ENCODE measurements at regions of chr14 and their contacts with region 1.

Region 1: GRCh38 chr14:92651106-92651757 is 97.2 kb downstream of the LGMN start:
- DNase-seq: peak; percentile 76
- H3K4me3 Mint-ChIP-seq: peak overlapping the region; percentile 96
- H3K27ac Mint-ChIP-seq: peak overlapping the region; percentile 94
- H3K4me1 Mint-ChIP-seq: peaks cover 76% of the 10 kb centered on the region
- H3K27me3 Mint-ChIP-seq: no peaks in the 10 kb centered on the region

Region 2: GRCh38 chr14:92121670-92122350 is 529.4 kb before region 1 on chr14 and contains the starts of genes CPSF2 and NDUFB1:
- intact Hi-C with region 1: loop called (anchors 5 kb)
- DNase-seq: peak; percentile 80
- H3K4me3 Mint-ChIP-seq: peak within 1 kb of the TSS; percentile 97
- H3K27ac Mint-ChIP-seq: peak within 1 kb of the TSS; percentile 100
- H3K4me1 Mint-ChIP-seq: peaks cover 29% of the 10 kb centered on the region
- H3K27me3 Mint-ChIP-seq: no peaks in the 10 kb centered on the region
- total RNA-seq, gene CPSF2: 103 and 104 TPM in 2 replicates
- total RNA-seq, gene NDUFB1: 73.3 and 83.5 TPM in 2 replicates

Region 3: DNA sequence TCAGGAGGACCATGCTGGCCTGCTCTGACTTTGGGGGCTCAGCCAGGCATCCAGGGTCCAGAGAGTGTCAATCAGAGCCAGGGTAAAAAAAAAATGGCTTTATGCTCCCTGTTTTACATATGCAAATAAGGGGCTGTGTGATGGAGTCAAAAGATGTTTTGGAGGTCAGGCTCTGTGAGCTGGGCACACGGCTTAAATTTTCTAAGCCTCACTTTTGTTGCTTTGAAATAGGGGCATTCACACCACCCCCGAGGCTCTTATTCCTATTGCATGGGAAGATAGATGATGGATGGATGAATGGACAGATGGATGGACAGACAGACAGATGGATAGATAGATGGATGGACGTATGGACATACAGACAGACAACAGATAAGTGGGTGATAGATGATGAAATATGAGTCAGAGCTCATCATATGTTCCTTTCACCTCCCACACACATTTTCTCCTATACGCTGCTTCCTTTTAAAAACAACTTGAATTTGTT is 94.9 kb before region 1 on chr14:
- intact Hi-C with region 1: loop called (anchors 1 kb)
- DNase-seq: no peak
- H3K4me3 Mint-ChIP-seq: peak overlapping the region; percentile 28
- H3K27ac Mint-ChIP-seq: peak overlapping the region; percentile 92
- H3K4me1 Mint-ChIP-seq: peaks cover 71% of the 10 kb centered on the region
- H3K27me3 Mint-ChIP-seq: no peaks in the 10 kb centered on the region

Region 4: GRCh38 chr14:92585981-92586937 is 65.0 kb before region 1 on chr14:
- intact Hi-C with region 1: loop called (anchors 1 kb)
- DNase-seq: peak; percentile 36
- H3K4me3 Mint-ChIP-seq: peak overlapping the region; percentile 67
- H3K27ac Mint-ChIP-seq: peak overlapping the region; percentile 82
- H3K4me1 Mint-ChIP-seq: peaks cover 83% of the 10 kb centered on the region
- H3K27me3 Mint-ChIP-seq: peaks cover 2% of the 10 kb centered on the region

Region 5: GRCh38 chr14:92668276-92668973 is 17.2 kb after region 1 on chr14:
- intact Hi-C with region 1: loop called (anchors 1 kb)
- DNase-seq: no peak
- H3K4me3 Mint-ChIP-seq: peak overlapping the region; percentile 6
- H3K27ac Mint-ChIP-seq: peak overlapping the region; percentile 64
- H3K4me1 Mint-ChIP-seq: peaks cover 41% of the 10 kb centered on the region
- H3K27me3 Mint-ChIP-seq: no peaks in the 10 kb centered on the region

Region 6: DNA sequence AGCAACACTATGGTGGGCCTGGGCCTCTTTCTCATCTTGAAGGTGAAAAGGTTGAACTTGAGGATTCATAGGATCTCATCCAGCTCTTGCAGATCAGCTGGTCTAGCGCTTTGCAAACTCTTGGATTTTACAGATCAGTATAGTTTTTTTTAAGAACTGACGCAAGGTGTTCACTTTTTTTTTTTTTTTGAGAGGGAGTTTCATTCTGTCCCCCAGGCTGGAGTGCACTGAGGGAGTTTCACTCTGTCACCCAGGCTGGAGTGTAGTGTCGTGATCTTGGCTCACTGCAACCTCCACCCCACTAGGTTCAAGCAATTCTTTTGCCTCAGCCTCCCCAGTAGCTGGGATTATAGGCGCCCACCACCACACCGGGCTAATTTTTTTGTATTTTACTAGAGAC is 117.6 kb after region 1 on chr14:
- intact Hi-C with region 1: loop called (anchors 2 kb)
- DNase-seq: no peak
- H3K4me3 Mint-ChIP-seq: no peak overlapping the region
- H3K27ac Mint-ChIP-seq: no peak overlapping the region
- H3K4me1 Mint-ChIP-seq: peaks cover 44% of the 10 kb centered on the region
- H3K27me3 Mint-ChIP-seq: peaks cover 37% of the 10 kb centered on the region

Region 7: DNA sequence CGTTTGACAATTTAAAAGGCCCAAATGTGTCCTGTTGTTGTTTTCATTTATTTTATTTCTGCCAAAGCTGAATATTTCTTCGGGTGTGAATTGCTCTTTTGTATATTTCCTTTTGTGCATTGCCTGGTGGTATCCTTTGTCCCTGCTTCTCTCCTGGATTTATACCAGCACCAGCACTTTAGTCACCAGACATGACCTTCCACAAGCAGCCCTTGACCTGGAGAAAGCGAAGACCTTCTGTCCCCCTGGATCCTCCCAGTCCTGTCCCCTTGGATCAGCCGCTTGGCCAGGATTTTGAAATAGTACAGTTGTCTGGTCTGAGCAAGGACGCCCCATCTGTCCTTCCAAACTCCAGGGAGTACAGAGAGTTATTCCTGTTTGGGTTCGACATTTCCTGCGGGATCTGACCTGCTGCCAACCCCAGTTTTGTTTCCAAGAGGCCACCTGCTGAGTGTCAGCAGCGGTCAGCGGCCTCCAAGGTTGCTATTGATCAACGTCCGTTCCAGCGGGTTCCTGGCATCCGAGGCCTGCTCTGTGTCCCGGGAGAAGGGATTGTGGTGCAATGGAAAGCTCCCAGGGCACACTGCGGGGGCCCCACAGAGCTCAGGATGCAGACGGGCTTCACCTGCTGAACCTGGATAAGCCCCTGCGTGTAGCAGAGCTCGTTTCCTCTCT is 226.7 kb after region 1 on chr14:
- intact Hi-C with region 1: no loop called
- DNase-seq: no peak
- H3K4me3 Mint-ChIP-seq: no peak overlapping the region
- H3K27ac Mint-ChIP-seq: no peak overlapping the region
- H3K4me1 Mint-ChIP-seq: no peaks in the 10 kb centered on the region
- H3K27me3 Mint-ChIP-seq: peaks cover 8% of the 10 kb centered on the region

Measured in activated T-helper 1 cell treated with anti-CD3 and anti-CD28 coated beads, Interleukin-12 subunit alpha, Interleukin-12 subunit beta, Interleukin-2, Interleukin-4 antibody, amounts not matched to agents 30 ng/mL and 10 ng/mL and 1 ng/mL, durations not matched to agents 14 hours and 24 hours and 36 hours (primary cell).